Transverse colon (tissue), 4 donors: ENCODE measurements at regions of chr16 and their contacts with region 1.

Region 1: GRCh38 chr16:74785031-74785430 is 10.4 kb upstream of the FA2H start:
- DNase-seq: no peak
- H3K4me3 ChIP-seq: no peak overlapping the region
- H3K27ac ChIP-seq: no peak overlapping the region
- H3K4me1 ChIP-seq: peaks cover 0 to 8% (median 0%) of the 10 kb centered on the region in 4 donors
- H3K27me3 ChIP-seq: no peaks in the 10 kb centered on the region
- CTCF ChIP-seq: no peak
- EP300 ChIP-seq: no peak
- POLR2A ChIP-seq: no peak

Region 2: GRCh38 chr16:74684131-74684530 is 100.9 kb before region 1 on chr16:
- in situ Hi-C with region 1: no loop called
- intact Hi-C with region 1: no loop called
- DNase-seq: no peak
- H3K4me3 ChIP-seq: no peak overlapping the region
- H3K27ac ChIP-seq: no peak overlapping the region
- H3K4me1 ChIP-seq: no peaks in the 10 kb centered on the region
- H3K27me3 ChIP-seq: no peaks in the 10 kb centered on the region
- CTCF ChIP-seq: no peak
- EP300 ChIP-seq: no peak
- POLR2A ChIP-seq: no peak

Region 3: DNA sequence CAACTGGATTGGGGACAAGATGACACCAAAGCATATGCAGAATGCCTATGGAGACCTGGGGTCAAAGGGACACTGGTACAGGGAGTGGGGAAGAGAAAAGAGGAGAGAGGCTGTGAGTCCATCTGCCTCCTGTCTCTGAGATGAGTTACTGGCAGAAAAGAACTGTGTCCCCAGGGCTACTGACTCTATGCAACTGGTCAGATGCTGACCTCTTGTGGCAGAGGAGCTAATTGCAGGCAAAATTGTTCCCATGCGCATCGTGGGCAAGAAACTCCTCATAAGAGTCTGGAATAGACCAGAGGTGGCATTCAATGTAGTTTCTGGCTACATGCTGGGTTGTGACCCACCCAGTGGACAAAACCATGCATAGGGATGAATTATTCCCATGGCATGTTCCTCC is 58.3 kb before region 1 on chr16:
- in situ Hi-C with region 1: no loop called
- intact Hi-C with region 1: loop called (anchors 10 kb)
- DNase-seq: peak; percentile 29
- H3K4me3 ChIP-seq: no peak overlapping the region
- H3K27ac ChIP-seq: peak overlapping the region in 1 of 4 donors; percentile 6
- H3K4me1 ChIP-seq: peaks cover 5 to 33% (median 16%) of the 10 kb centered on the region in 4 donors
- H3K27me3 ChIP-seq: no peaks in the 10 kb centered on the region
- CTCF ChIP-seq: peak in 4 of 5 experiments; percentile 28 to 57 (median 39)
- EP300 ChIP-seq: no peak
- POLR2A ChIP-seq: no peak

Region 4: GRCh38 chr16:74954763-74955162 is 169.7 kb after region 1 on chr16:
- in situ Hi-C with region 1: no loop called
- intact Hi-C with region 1: no loop called
- DNase-seq: no peak
- H3K4me3 ChIP-seq: no peak overlapping the region
- H3K27ac ChIP-seq: no peak overlapping the region
- H3K4me1 ChIP-seq: no peaks in the 10 kb centered on the region
- H3K27me3 ChIP-seq: no peaks in the 10 kb centered on the region
- CTCF ChIP-seq: no peak
- EP300 ChIP-seq: no peak
- POLR2A ChIP-seq: no peak